Activated CD8-positive, alpha-beta memory T cell treated with anti-CD3 and anti-CD28 coated beads, Interleukin-2, amount 10 ng/mL, durations not matched to agents 7 days and 5 days (primary cell): ENCODE measurements at regions of chr14 and their contacts with region 1.

Region 1: DNA sequence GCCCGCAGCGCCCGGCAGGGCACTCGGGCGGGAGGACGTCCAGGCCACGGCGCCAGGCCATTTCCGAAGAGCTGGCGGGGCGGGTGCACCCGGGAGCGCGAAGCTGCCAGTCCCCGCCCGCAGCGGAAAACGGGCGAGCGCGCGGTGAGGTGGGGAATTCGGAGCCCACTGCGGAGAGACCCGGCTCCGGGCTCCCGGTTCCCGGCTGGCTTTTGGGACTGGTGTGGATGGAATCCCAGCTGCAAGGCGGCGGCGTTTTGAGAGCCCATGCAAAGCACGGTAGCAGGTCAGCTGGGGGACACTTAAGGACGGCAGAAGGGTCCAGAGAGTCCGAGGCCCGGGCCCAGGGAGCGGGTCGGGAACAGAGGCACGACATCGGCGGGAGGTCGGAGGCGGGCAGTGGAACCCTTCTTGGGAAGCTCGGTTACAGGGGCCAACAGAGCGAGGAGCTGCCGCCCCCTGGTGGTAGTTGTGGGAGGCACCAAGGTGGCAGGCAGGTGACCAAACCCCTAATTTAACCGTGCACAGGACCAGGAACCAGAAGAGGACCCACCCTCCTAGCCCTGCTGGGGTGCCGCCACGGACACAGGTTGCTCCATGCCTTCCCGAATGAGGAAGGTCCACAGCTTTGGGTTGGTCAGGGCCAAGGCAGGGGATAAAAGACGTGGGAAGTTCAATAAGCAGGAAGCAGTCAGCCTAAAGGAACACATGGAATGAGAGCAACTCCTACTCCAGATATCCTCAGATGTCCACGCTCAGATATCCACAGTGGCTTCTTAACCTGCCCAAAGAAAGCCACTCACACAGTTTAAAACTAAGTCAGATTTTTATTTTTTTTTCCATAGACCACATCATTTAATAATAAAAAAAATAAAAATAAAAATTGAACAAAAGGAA is 685 bp upstream of the CDH24 start:
- DNase-seq: peak; percentile 92
- ATAC-seq: peak; percentile 77
- H3K4me3 Mint-ChIP-seq: peak overlapping the region; percentile 77
- H3K27ac Mint-ChIP-seq: no peak overlapping the region
- H3K4me1 Mint-ChIP-seq: peaks cover 16% of the 10 kb centered on the region
- H3K27me3 Mint-ChIP-seq: peaks cover 8% of the 10 kb centered on the region

Region 2: GRCh38 chr14:22973217-22974032 is 84.6 kb before region 1 on chr14:
- CTCF ChIA-PET with region 1: interaction called, 147 read pairs
- DNase-seq: peak; percentile 52
- ATAC-seq: peak; percentile 51
- H3K4me3 Mint-ChIP-seq: no peak overlapping the region
- H3K27ac Mint-ChIP-seq: no peak overlapping the region
- H3K4me1 Mint-ChIP-seq: no peaks in the 10 kb centered on the region
- H3K27me3 Mint-ChIP-seq: peaks cover 14% of the 10 kb centered on the region

Region 3: GRCh38 chr14:23006544-23007419 is 51.2 kb before region 1 on chr14:
- CTCF ChIA-PET with region 1: interaction called, 867 read pairs
- DNase-seq: peak; percentile 98
- ATAC-seq: peak; percentile 97
- H3K4me3 Mint-ChIP-seq: peak overlapping the region; percentile 93
- H3K27ac Mint-ChIP-seq: peak overlapping the region; percentile 96
- H3K4me1 Mint-ChIP-seq: peaks cover 44% of the 10 kb centered on the region
- H3K27me3 Mint-ChIP-seq: no peaks in the 10 kb centered on the region

Region 4: DNA sequence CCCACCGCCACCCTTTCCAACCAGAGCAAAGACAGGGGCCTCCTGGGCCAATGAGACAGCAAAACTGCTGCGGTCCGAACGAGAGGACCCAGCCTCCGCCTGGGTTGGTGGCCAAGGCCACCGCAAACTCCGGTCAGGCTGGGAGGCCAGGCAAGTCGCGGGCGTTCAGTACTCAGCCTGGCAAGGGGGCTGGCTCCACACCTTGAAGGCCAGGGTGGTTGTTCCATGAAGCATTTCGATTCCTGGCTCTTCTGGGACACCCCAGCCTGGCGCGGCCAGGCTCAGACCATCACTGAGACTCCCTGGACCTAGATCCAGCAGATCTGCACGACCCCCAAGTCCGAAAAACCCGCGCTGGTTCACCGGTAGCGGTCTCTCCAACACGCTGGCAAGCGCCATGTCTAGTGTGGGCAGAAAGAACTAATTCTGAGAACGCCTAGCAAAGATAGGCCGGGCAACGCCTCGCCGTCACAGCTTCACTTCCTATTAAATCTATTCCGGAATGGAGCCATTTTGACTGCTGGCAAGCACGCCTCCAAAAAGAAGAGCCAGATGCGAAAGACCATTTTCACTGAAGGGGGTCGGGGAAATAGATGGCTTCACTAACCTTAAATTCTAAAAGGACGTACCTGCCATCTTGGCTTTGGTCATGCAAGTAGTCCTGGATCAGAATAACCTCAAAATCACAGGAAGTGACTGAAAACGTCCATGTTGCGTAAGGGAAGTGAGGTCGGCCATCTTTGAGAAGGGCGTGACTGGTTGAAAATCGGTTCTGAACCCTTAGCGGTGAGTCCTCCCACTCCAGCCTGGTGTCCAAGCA is 23.3 kb before region 1 on chr14 and contains the start of gene PSMB5:
- CTCF ChIA-PET with region 1: interaction called, 16 read pairs
- DNase-seq: peak; percentile 95
- ATAC-seq: peak; percentile 95
- H3K4me3 Mint-ChIP-seq: peak within 1 kb of the TSS; percentile 83
- H3K27ac Mint-ChIP-seq: peak within 1 kb of the TSS; percentile 95
- H3K4me1 Mint-ChIP-seq: peaks cover 27% of the 10 kb centered on the region
- H3K27me3 Mint-ChIP-seq: peaks cover 3% of the 10 kb centered on the region
- total RNA-seq, gene PSMB5: 66.7 to 95.3 TPM

Region 5: GRCh38 chr14:23041729-23042128 is 16.3 kb before region 1 on chr14:
- CTCF ChIA-PET with region 1: interaction called, 16 read pairs
- DNase-seq: no peak
- ATAC-seq: no peak
- H3K4me3 Mint-ChIP-seq: no peak overlapping the region
- H3K27ac Mint-ChIP-seq: no peak overlapping the region
- H3K4me1 Mint-ChIP-seq: no peaks in the 10 kb centered on the region
- H3K27me3 Mint-ChIP-seq: peaks cover 3% of the 10 kb centered on the region

Region 6: DNA sequence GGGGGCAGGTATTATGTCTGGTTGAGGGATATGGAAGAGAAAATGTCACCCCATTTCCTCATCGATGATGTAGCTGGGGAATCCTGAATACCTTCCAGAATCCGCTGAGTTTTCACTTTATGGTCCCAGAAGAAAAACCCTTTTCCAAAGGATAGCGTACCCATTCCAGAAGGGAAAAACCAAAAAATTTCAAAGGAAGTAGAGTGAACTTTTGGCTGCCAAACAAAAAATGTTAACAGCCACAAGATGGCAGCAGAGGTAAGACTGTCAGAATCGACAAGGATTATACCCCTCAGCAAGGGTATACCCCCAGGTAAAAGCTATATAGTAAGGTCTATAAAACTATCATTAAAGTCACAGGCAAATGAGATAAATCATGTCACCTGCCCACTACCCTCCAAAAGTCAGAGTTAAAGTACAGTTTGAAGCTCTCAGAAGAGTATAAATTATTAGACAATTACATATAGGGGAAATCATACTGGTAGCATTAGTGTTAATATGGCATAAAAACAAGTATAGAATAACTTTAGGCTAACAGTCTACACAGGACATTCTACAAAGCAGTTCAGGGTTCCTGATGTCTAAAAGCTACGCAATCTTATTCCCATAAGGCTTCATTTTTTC is 18.9 kb after region 1 on chr14:
- CTCF ChIA-PET with region 1: interaction called, 29 read pairs
- DNase-seq: no peak
- ATAC-seq: peak; percentile 58
- H3K4me3 Mint-ChIP-seq: no peak overlapping the region
- H3K27ac Mint-ChIP-seq: no peak overlapping the region
- H3K4me1 Mint-ChIP-seq: peaks cover 6% of the 10 kb centered on the region
- H3K27me3 Mint-ChIP-seq: no peaks in the 10 kb centered on the region

Region 7: DNA sequence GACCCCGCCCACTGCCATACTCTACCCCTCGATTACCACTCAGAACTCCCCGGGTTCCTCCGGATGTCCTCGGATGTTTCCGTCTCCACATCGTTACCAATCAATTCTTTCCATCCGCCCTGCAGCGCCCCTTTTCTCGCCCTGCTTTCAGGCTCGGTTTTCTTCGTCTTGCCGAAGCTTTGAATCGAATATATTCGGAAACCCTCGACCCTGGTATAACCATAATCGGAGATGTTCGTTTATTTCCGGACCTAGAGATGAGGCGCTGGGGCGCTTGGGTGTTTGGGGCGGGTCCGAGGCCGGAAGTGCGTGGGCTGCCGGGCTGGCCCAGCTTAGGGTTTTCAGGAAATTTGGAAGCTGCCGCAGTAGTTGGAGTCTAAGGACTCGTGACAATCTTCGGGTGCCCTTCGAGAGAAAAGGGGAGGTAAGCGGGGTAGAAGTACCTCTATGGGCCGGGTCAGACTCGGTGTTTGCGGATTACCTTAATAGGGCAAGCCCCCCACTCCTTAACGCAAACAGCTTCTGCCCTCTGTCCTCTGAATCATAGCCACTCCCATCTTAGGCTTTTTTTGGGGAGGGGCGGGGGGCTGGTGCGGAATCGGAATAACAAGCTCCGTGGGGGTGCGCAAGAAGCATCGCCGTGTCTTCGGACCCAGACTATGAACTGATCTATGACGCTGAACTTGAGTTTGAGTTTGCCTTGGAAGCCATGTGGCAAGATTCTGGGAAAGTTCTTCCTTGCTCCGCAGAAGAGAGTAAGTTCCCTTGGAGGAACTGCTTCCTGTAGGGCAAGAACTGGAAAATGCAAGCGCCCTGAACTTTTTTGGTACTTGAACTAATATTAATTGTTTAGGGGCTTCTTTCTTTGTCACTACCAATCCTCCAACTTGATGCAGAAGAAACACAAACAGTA is 37.4 kb after region 1 on chr14 and contains the start of gene C14orf119:
- CTCF ChIA-PET with region 1: interaction called, 18 read pairs
- DNase-seq: peak; percentile 100
- ATAC-seq: peak; percentile 94
- H3K4me3 Mint-ChIP-seq: no peak within 1 kb of the TSS
- H3K27ac Mint-ChIP-seq: no peak within 1 kb of the TSS
- H3K4me1 Mint-ChIP-seq: peaks cover 36% of the 10 kb centered on the region
- H3K27me3 Mint-ChIP-seq: no peaks in the 10 kb centered on the region
- total RNA-seq, gene C14orf119: 44.6 to 53.2 TPM

Region 8: DNA sequence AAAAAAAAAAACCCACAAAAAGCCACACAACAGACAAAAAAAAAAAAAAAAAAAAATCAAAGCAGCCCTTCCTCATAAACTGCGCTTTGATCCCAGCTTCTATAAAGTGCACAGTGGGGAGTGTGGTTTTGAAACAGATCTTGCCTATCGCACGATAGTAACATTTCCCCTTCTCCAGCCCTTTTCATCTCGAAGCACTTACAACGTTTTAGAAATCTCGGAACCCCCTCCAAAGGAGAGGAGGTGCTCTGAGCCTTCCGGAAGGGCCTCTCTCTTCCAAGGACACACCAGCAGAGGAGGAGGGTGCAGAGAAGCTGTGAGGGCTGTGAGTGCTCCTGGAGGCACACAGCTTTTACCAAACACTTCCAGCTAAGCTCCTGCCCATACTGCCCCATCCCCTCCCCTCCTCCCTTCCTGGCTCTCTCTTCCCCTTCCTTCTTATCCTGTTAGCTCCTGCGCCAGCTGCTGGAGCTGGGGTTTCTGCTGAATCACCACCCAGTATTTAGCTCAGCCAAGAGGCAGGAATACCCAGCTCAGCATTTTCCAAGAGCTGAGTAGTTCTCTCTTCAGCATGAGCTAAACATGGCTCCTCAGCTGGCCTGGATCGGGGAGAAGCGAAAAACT is 97.1 kb after region 1 on chr14:
- CTCF ChIA-PET with region 1: no interaction called
- DNase-seq: no peak
- ATAC-seq: no peak
- H3K4me3 Mint-ChIP-seq: no peak overlapping the region
- H3K27ac Mint-ChIP-seq: no peak overlapping the region
- H3K4me1 Mint-ChIP-seq: no peaks in the 10 kb centered on the region
- H3K27me3 Mint-ChIP-seq: peaks cover 22% of the 10 kb centered on the region